Uterus (tissue), 4 donors: ENCODE measurements at regions of chrX and their contacts with region 1.

Region 1: GRCh38 chrX:107776649-107777535 is 641 bp upstream of the NCBP2L start:
- DNase-seq: peak; percentile 80 to 92
- H3K4me3 ChIP-seq: peak overlapping the region; percentile 57 to 59
- H3K27ac ChIP-seq: peak overlapping the region; percentile 84 to 85
- H3K4me1 ChIP-seq: no peaks in the 10 kb centered on the region
- H3K27me3 ChIP-seq: no peaks in the 10 kb centered on the region
- CTCF ChIP-seq: peak; percentile 66 to 88 (median 78)
- POLR2A ChIP-seq: peak in 1 of 2 donors; percentile 32

Region 2: DNA sequence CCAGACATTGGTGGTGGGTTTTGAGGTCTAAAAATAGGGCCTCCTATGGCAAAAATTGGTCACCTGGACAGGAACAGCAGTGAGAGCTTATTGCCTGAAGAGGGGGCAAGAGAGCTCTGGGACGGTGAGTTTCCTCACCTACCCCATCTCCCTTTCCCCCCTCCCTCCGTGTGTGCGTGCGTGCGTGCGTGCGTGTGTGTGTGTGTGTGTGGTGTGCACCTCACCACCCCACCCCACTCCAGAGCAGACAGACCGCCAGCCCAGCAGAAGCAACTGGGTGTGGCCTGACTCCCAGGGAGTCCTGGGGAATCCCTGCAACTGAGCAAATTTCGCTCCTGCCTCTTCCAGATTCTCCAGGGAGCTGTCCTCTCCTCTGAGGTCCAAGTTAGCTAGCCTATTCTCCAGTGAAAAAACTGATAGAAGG is 103.9 kb before region 1 on chrX:
- intact Hi-C with region 1: loop called (anchors 5 kb)
- DNase-seq: peak; percentile 83 to 90
- H3K4me3 ChIP-seq: peak overlapping the region in 1 of 2 donors; percentile 1
- H3K27ac ChIP-seq: peak overlapping the region; percentile 94
- H3K4me1 ChIP-seq: peaks cover 0 to 6% of the 10 kb centered on the region in 2 donors
- H3K27me3 ChIP-seq: no peaks in the 10 kb centered on the region
- CTCF ChIP-seq: peak; percentile 64 to 83 (median 68)
- POLR2A ChIP-seq: peak in 1 of 2 donors; percentile 35

Region 3: GRCh38 chrX:107716816-107717700 is 59.8 kb before region 1 on chrX:
- intact Hi-C with region 1: loop called (anchors 5 kb)
- DNase-seq: peak; percentile 85 to 91
- H3K4me3 ChIP-seq: peak overlapping the region; percentile 66 to 70
- H3K27ac ChIP-seq: peak overlapping the region; percentile 95 to 96
- H3K4me1 ChIP-seq: no peaks in the 10 kb centered on the region
- H3K27me3 ChIP-seq: no peaks in the 10 kb centered on the region
- CTCF ChIP-seq: peak in 2 of 4 experiments; percentile 4 to 30
- POLR2A ChIP-seq: peak; percentile 93 to 97

Region 4: DNA sequence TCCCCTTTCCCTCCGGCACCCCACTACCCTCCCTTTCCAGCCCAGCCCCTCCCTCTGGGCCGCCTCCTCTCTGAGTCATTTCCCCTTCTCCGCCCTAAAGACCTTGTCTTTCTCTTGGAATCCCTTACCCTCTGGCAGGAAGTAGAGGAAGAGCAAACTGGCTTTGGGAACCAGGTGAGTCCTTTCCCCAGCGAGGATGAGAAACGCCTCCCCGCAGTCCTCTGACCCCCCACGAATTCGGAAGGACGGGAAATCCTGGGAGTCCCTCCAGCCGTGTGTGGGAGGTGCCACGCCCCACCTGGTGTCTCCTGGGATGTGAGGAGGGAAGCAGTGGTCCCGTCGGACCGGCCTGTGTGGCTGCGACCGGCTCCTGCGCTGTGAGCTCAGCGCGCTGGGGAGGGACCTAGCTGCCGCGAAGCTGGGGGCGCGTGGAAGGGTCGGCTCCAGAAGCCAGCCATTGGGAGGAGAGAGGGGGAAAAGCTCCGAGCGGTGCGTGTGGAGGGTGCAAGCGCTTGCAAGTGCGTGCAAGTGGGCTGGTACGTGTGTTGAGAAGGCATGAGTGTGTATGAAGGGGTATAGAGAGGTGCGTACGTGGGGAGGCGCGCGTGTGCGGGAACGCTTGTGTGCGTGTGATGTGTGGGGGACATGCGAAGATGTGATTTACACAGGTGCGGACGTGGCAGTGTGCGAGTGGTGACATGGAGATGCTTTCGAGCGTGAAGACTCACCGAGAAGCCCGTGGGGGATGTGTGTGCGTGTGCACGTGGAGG is 159.0 kb after region 1 on chrX:
- intact Hi-C with region 1: no loop called
- DNase-seq: no peak
- H3K4me3 ChIP-seq: no peak overlapping the region
- H3K27ac ChIP-seq: no peak overlapping the region
- H3K4me1 ChIP-seq: no peaks in the 10 kb centered on the region
- H3K27me3 ChIP-seq: peaks cover 0 to 4% of the 10 kb centered on the region in 2 donors
- CTCF ChIP-seq: no peak
- POLR2A ChIP-seq: no peak